ENCODE measurements at regions of chr1 and their contacts with region 1.

Region 1: DNA sequence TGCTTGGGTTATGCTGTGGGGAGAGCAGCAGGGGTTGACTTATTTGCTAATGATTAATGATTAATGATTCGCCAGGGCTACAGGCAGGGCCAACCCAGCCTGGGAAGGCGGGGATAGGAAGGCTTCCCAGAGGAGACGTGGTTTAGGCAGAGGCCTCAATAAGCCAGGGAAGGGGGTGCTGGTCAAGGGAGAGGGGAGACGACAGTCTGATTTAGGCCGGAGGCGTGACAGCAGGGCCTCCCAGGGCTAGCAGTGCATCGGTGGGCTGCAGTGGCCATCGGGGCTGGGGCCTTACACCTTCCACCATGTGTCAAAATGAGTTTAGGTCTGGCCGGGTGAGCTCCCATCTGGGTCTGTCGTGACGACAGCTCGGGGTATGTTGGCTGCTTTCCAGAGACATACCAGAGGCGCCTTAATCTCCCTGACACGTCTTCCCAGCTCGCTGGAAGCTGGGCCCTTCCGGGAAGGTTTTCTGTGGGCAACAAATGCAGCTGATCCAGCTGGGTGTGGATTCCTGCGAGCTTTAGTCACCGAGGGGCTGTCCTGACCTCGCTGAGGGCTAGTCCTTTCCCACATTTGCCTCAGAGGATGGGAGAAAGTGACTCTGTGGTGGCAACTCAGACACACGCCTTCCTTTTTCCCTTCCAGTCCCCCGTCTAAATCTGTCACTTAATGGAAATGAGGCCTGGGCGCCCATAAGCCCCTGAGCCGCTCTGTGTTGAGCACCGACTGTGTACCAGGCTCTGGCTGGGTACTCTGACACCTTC is 3.7 kb upstream of the SLC1A7 start:
- DNase-seq: peak; percentile 92
- H3K27ac ChIP-seq: peak overlapping the region; percentile 77
- CTCF ChIP-seq: no peak

Region 2: GRCh38 chr1:52726265-52727113 is 419.6 kb before region 1 on chr1 and contains the start of gene ZYG11B:
- CTCF ChIA-PET with region 1: interaction called, 10 read pairs
- POLR2A ChIA-PET with region 1: no interaction called
- DNase-seq: peak; percentile 99
- H3K27ac ChIP-seq: peak within 1 kb of the TSS; percentile 83
- CTCF ChIP-seq: no peak

Measured in RWPE1 (cell line).